Heart right ventricle (tissue), 16 donors: ENCODE measurements at regions of chr16 and their contacts with region 1.

Region 1: GRCh38 chr16:84379710-84380326 is 11.5 kb downstream of the ATP2C2 start:
- DNase-seq: no peak
- ATAC-seq: peak in 2 of 8 donors; percentile 29 to 74
- H3K4me3 ChIP-seq: no peak overlapping the region
- H3K27ac ChIP-seq: no peak overlapping the region
- H3K4me1 ChIP-seq: no peaks in the 10 kb centered on the region
- H3K27me3 ChIP-seq: peaks cover 0 to 10% (median 5%) of the 10 kb centered on the region in 7 donors
- CTCF ChIP-seq: no peak

Region 2: DNA sequence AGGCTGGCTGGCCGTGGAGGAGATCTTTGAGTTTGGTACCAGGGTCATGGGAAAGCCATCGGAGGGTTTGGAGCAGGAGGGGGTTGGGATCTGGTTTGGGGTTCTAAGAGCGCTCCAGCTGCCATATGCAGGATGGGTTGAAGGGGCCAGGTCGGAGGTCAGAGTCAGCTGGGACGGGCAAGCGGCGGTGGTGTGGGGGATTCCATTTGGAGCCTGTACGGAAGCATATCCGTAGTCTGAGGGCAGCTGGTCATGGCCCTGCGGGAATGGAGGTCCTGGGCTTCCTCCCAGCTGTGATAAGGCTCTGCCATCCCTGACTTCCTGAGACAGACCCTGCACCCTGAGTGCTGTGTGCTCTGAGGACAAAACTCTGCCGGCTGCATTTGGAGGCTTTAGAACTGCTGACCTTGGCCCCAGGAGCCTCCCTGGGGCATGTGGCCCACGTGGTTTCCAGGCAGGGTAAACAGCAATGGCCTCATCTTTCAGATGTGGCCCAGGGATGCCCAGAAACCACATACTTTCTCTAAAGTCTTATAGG is 35.0 kb after region 1 on chr16:
- intact Hi-C with region 1: loop called in 1 of 10 experiments (anchors 5 kb)
- DNase-seq: peak in 1 of 2 donors; percentile 25
- ATAC-seq: peak in 6 of 8 donors; percentile 39 to 71 (median 55)
- H3K4me3 ChIP-seq: no peak overlapping the region
- H3K27ac ChIP-seq: no peak overlapping the region
- H3K4me1 ChIP-seq: peaks cover 0 to 12% (median 0%) of the 10 kb centered on the region in 9 donors
- H3K27me3 ChIP-seq: peaks cover 0 to 15% (median 0%) of the 10 kb centered on the region in 7 donors
- CTCF ChIP-seq: no peak